GM12878 (cell line): ENCODE measurements at regions of chr5 and their contacts with region 1.

Region 1: DNA sequence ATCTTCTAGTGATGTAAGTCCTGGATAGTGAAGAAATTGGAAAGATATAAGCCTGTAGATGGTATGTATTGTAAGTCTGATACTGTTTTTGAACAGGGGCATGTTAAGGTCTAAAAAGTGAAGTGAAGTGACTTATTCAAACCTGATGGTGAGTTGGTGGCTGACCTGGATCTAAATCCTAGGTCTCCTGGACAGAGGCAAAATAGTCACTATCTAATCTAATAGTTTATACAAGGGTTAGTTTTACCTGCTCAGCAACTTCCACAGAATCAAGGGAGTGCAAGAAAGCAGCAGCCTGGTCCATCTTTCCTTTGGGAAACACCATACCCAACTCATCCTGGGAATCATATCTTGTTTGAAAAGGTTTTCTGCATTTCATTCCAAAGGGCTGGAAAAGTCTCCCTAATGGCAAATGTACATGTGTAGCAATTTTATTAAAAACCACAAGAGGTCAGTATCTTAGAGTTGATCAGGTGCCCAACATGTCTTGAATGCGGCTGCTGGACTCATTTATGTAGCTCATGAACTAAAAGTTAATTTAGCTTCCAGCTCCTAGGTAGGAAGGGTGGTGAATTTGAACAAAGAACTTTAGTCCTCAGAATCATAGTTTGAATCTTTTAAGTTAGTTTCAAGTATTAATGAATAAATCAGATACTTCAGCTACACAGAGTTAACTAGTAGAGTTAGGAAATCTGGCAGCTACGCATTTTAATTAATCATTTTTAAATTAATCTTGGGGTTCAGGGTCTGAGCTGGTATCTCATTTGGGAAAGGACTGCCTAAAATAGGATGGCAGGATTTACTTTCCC is 26.0 kb downstream of the SKP2 start:
- DNase-seq: no peak
- ATAC-seq: peak; percentile 79
- H3K4me3 ChIP-seq: peak overlapping the region; percentile 1; the same call in 1 of the 2 replicates
- H3K27ac ChIP-seq: peak overlapping the region; percentile 50; the same call in 1 of the 2 replicates
- H3K4me1 ChIP-seq: peaks cover 14% of the 10 kb centered on the region
- H3K27me3 ChIP-seq: no peaks in the 10 kb centered on the region
- CTCF ChIP-seq: peak; percentile 13 to 37 (median 37); a peak in 4 of 6 replicates
- EP300 ChIP-seq: no peak
- POLR2A ChIP-seq: no peak
- RAD21 ChIP-seq: peak; percentile 54

Region 2: GRCh38 chr5:36125868-36126267 is 52.1 kb before region 1 on chr5:
- CTCF ChIA-PET with region 1: no interaction called
- POLR2A ChIA-PET with region 1: no interaction called
- RAD21 ChIA-PET with region 1: no interaction called
- SMC1A ChIA-PET with region 1: no interaction called
- in situ Hi-C with region 1: no loop called
- intact Hi-C with region 1: no loop called
- DNase-seq: no peak
- ATAC-seq: no peak
- H3K4me3 ChIP-seq: no peak overlapping the region
- H3K27ac ChIP-seq: no peak overlapping the region
- H3K4me1 ChIP-seq: no peaks in the 10 kb centered on the region
- H3K27me3 ChIP-seq: no peaks in the 10 kb centered on the region
- CTCF ChIP-seq: no peak
- EP300 ChIP-seq: no peak
- POLR2A ChIP-seq: no peak
- RAD21 ChIP-seq: no peak

Region 3: DNA sequence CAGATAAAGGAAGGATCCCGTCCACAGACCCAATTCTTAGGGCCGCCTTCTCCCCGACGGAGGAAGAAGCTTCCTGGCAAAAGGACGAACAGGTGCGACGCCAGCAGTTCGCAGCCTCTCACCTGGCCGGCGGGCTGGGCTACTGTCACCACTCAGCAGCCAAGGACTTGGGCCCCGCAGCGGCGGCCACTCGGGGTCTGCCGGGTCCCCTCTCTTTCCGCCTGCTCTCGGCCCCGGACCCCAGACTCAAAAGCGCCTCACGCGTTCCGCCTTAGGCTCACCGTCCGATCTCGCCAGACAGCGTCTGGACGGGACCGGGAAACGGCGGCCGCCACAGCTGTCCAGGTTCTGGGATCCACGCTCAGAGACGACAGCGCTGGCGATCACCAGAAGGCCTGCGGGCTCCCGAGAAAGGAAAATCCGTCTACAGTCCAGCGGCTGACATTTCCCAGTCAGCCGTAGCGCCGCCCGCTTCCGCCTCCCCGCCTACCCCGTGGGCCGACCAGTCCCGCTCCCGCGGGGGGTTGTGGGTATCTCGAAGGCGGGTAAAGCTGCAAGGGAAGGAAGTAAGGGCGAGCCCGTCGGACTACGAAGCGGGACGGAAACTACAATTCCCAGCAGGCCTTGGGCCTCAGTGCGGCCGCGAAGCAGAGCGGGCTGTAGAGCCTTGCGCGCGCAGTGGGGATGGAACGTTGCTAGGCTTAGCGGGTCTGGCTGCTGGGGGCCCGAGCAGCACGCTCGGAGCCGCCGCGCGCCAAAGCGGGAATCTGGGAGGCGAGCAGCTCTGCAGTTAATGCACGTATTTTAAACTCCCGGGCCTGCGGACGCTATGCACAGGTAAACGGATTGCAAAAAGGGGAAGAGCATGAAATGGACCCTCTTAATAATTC is 26.2 kb before region 1 on chr5 and contains the starts of genes LMBRD2 and SKP2:
- CTCF ChIA-PET with region 1: interaction called, 13 read pairs
- POLR2A ChIA-PET with region 1: interaction called, 6 read pairs
- RAD21 ChIA-PET with region 1: interaction called, 14 read pairs
- SMC1A ChIA-PET with region 1: interaction called, 23 read pairs
- in situ Hi-C with region 1: no loop called
- intact Hi-C with region 1: no loop called
- DNase-seq: peak; percentile 95
- ATAC-seq: peak; percentile 97
- H3K4me3 ChIP-seq: peak within 1 kb of the TSS; percentile 94
- H3K27ac ChIP-seq: peak within 1 kb of the TSS; percentile 82
- H3K4me1 ChIP-seq: no peaks in the 10 kb centered on the region
- H3K27me3 ChIP-seq: no peaks in the 10 kb centered on the region
- CTCF ChIP-seq: no peak
- EP300 ChIP-seq: no peak
- POLR2A ChIP-seq: peak; percentile 82
- RAD21 ChIP-seq: no peak
- polyA plus RNA-seq, gene LMBRD2: 0.90 to 1.8 TPM
- polyA plus RNA-seq, gene SKP2: 13.9 to 17.9 TPM

Region 4: GRCh38 chr5:36305571-36306326 is 127.8 kb after region 1 on chr5:
- CTCF ChIA-PET with region 1: interaction called, 34 read pairs
- POLR2A ChIA-PET with region 1: no interaction called
- RAD21 ChIA-PET with region 1: interaction called, 3 read pairs
- SMC1A ChIA-PET with region 1: interaction called, 9 read pairs
- in situ Hi-C with region 1: no loop called
- intact Hi-C with region 1: loop called (anchors 1 kb)
- DNase-seq: no peak
- ATAC-seq: peak; percentile 89
- H3K4me3 ChIP-seq: no peak overlapping the region
- H3K27ac ChIP-seq: no peak overlapping the region
- H3K4me1 ChIP-seq: no peaks in the 10 kb centered on the region
- H3K27me3 ChIP-seq: peaks cover 0 to 3% of the 10 kb centered on the region in 2 experiments; a peak in 1 of 4 replicates
- CTCF ChIP-seq: peak; percentile 61 to 83 (median 74)
- EP300 ChIP-seq: no peak
- POLR2A ChIP-seq: no peak
- RAD21 ChIP-seq: peak; percentile 82